Tibial artery (tissue), 4 donors: ENCODE measurements at regions of chrX and their contacts with region 1.

Region 1: GRCh38 chrX:39149761-39150160 is 348.5 kb downstream of the MID1IP1 start:
- DNase-seq: peak; percentile 78 to 82
- H3K4me3 ChIP-seq: no peak overlapping the region
- H3K27ac ChIP-seq: no peak overlapping the region
- H3K4me1 ChIP-seq: peaks cover 0 to 5% (median 0%) of the 10 kb centered on the region in 4 donors
- H3K27me3 ChIP-seq: no peaks in the 10 kb centered on the region
- CTCF ChIP-seq: peak; percentile 63 to 66

Region 2: DNA sequence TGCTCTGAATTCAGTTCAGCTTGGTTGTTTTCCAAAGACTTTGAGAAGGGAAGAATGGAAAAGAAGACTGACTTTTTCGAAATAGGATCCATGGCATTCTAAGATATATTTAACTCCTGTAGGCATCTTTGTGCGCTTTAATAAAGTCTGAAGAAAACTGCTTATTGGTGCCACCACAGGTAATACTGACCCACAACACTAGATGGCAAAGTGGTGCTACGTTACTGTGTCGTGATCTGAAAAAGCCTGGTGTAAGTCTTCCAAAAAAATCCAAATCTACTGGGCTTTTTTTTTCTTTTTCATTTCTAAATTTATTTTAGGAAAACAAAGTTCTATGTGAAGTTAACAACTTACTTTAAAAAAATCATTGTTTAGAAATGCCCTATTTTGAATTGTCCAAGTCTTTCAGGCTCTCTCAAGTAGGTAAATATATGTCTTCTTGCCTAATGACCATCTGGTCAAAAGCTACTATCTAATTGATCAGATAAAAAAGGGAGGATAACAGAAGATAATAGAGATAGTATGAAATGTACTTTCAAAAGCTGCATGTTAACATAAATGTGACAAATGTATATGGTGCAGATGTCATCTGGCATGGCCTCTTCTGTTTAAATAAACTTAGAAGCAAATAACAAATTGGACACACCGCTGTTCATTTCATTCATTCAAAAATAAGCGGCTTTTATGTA is 395.5 kb before region 1 on chrX:
- intact Hi-C with region 1: loop called (anchors 10 kb)
- DNase-seq: peak in 1 of 2 donors; percentile 23
- H3K4me3 ChIP-seq: no peak overlapping the region
- H3K27ac ChIP-seq: no peak overlapping the region
- H3K4me1 ChIP-seq: no peaks in the 10 kb centered on the region
- H3K27me3 ChIP-seq: no peaks in the 10 kb centered on the region
- CTCF ChIP-seq: peak; percentile 54 to 66

Region 3: GRCh38 chrX:38896724-38897298 is 252.9 kb before region 1 on chrX:
- intact Hi-C with region 1: no loop called
- DNase-seq: no peak
- H3K4me3 ChIP-seq: no peak overlapping the region
- H3K27ac ChIP-seq: no peak overlapping the region
- H3K4me1 ChIP-seq: no peaks in the 10 kb centered on the region
- H3K27me3 ChIP-seq: no peaks in the 10 kb centered on the region
- CTCF ChIP-seq: no peak

Region 4: DNA sequence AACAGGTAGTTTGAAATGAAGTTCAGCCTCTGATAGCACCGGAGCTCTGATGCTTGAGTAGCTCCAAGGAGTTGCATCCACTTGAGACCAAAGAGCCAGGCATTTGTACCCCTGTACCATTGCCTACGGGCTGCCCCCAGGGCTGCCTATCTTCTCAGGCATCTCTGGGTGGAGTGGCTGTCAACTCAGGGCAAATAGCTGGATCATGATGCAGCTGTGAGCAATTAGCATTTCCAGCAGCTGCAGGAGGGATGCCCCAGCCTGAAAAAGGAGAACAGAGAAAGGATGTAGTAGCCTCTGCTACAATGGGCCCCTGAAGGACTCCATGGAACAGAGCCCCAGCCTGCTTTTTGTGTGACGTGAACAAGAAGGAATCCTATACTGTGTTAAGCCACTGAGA is 455.4 kb after region 1 on chrX:
- intact Hi-C with region 1: no loop called
- DNase-seq: no peak
- H3K4me3 ChIP-seq: no peak overlapping the region
- H3K27ac ChIP-seq: no peak overlapping the region
- H3K4me1 ChIP-seq: peaks cover 0 to 5% (median 0%) of the 10 kb centered on the region in 4 donors
- H3K27me3 ChIP-seq: no peaks in the 10 kb centered on the region
- CTCF ChIP-seq: no peak